PC-9 (cell line): ENCODE measurements at regions of chr7 and their contacts with region 1.

Region 1: DNA sequence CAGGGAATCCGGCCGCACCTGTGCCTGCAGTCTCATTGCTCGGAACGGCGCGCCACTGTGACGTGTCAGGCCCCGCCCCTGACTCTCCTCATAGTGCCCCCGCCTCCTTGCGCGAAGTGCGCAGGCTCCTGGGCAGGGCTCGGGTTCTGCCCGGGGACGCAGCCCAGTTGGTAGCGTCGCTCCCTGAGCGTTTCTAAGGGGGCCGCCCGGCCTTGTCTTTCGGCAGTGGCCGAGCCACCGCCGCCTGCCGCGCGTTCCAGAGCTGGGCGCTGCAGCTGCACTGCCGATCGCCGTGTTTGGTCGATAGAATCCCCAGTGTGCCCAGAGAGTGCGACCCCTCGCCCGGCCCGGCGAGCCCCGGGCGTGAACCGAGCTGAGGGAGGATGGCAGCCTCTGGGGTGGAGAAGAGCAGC is at the start of gene KLHL7:
- DNase-seq: peak; percentile 94 to 98
- H3K4me3 ChIP-seq: peak within 1 kb of the TSS; percentile 80
- H3K27ac ChIP-seq: peak within 1 kb of the TSS; percentile 80
- H3K4me1 ChIP-seq: peaks cover 20% of the 10 kb centered on the region
- H3K27me3 ChIP-seq: no peaks in the 10 kb centered on the region
- CTCF ChIP-seq: no peak
- total RNA-seq, gene KLHL7: 46.3 and 61.0 TPM in 2 replicates

Region 2: GRCh38 chr7:23013715-23014649 is 91.7 kb before region 1 on chr7 and contains the start of gene HYCC1:
- CTCF ChIA-PET with region 1: no interaction called
- POLR2A ChIA-PET with region 1: no interaction called
- intact Hi-C with region 1: loop called (anchors 5 kb)
- DNase-seq: peak; percentile 98 to 100
- H3K4me3 ChIP-seq: peak within 1 kb of the TSS; percentile 58
- H3K27ac ChIP-seq: no peak within 1 kb of the TSS
- H3K4me1 ChIP-seq: peaks cover 11% of the 10 kb centered on the region
- H3K27me3 ChIP-seq: no peaks in the 10 kb centered on the region
- CTCF ChIP-seq: peak; percentile 68
- total RNA-seq, gene HYCC1: 25.1 and 28.2 TPM in 2 replicates

Region 3: GRCh38 chr7:23117841-23118240 is 12.2 kb after region 1 on chr7:
- CTCF ChIA-PET with region 1: no interaction called
- POLR2A ChIA-PET with region 1: no interaction called
- intact Hi-C with region 1: no loop called
- DNase-seq: no peak
- H3K4me3 ChIP-seq: no peak overlapping the region
- H3K27ac ChIP-seq: no peak overlapping the region
- H3K4me1 ChIP-seq: no peaks in the 10 kb centered on the region
- H3K27me3 ChIP-seq: no peaks in the 10 kb centered on the region
- CTCF ChIP-seq: no peak

Region 4: DNA sequence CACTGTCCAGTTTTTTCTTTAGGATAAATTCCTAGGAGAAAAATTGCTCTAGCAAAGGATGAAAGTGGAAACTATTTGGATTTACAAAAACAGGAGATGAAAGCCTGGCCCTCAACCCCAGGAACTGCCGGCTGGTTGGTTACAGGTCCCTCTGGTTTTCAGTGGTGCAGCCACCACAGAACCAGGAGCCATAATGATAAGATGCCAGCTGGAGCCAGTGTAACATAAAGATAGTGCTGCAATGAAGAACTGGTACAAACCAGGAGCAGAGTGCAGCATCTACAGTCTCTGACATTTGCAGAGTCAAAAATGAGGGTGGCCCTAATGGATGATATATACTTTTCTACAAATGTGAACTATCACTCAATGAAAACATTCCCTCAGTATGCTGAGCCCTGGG is 55.8 kb after region 1 on chr7:
- CTCF ChIA-PET with region 1: no interaction called
- POLR2A ChIA-PET with region 1: no interaction called
- intact Hi-C with region 1: no loop called
- DNase-seq: no peak
- H3K4me3 ChIP-seq: no peak overlapping the region
- H3K27ac ChIP-seq: no peak overlapping the region
- H3K4me1 ChIP-seq: no peaks in the 10 kb centered on the region
- H3K27me3 ChIP-seq: no peaks in the 10 kb centered on the region
- CTCF ChIP-seq: no peak

Region 5: DNA sequence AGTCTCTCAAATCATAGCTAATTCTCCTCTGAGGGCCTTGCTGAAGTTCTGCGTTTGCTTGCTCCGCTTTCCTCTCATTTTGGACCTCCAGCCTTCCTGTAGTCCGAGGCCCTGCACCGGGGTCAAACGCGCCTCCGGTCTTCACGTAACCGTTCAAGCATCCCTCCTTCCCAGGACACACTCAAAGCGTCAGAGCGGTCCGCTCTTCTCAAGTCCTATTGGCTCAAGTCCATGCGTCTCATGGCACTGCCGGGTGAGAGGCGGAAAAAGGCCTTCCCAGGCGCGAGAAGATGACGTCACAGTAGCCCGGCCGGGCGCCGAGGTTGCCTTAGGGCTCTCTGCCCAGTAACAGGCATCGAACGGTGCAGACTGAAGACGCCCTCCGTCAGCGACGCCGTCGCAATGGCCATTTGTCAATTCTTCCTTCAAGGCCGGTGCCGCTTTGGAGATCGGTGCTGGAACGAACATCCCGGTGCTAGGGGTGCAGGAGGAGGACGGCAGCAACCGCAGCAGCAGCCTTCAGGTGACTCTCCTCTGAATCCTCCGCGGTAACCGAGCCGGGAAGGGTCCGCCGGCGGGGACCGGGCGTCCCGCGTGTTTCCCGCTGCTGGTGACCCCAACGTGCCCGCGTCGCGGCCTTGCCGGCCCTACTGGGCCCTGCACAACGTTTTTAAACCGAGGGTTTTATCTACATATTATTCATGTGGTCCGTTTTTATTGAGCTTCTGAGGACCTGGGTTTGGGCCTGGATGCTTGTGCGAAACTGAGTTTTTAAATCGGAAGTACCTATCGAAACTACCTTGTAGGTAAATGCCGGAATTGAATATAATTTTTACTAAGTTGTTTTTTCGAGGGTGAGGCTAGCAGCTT is 76.3 kb after region 1 on chr7 and contains the start of gene NUP42:
- CTCF ChIA-PET with region 1: interaction called, 6 read pairs
- POLR2A ChIA-PET with region 1: interaction called, 4 read pairs
- intact Hi-C with region 1: loop called (anchors 1 kb)
- DNase-seq: peak; percentile 99 to 100
- H3K4me3 ChIP-seq: peak within 1 kb of the TSS; percentile 98
- H3K27ac ChIP-seq: peak within 1 kb of the TSS; percentile 87
- H3K4me1 ChIP-seq: peaks cover 27% of the 10 kb centered on the region
- H3K27me3 ChIP-seq: no peaks in the 10 kb centered on the region
- CTCF ChIP-seq: no peak
- total RNA-seq, gene NUP42: 41.3 and 51.3 TPM in 2 replicates

Region 6: GRCh38 chr7:23254051-23254681 is 148.5 kb after region 1 on chr7:
- CTCF ChIA-PET with region 1: no interaction called
- POLR2A ChIA-PET with region 1: no interaction called
- intact Hi-C with region 1: no loop called
- DNase-seq: no peak
- H3K4me3 ChIP-seq: no peak overlapping the region
- H3K27ac ChIP-seq: no peak overlapping the region
- H3K4me1 ChIP-seq: no peaks in the 10 kb centered on the region
- H3K27me3 ChIP-seq: 0 out of 2 replicates have a peak, but pooled peaks cover 15% of the 10 kb centered on the region
- CTCF ChIP-seq: no peak

Region 7: DNA sequence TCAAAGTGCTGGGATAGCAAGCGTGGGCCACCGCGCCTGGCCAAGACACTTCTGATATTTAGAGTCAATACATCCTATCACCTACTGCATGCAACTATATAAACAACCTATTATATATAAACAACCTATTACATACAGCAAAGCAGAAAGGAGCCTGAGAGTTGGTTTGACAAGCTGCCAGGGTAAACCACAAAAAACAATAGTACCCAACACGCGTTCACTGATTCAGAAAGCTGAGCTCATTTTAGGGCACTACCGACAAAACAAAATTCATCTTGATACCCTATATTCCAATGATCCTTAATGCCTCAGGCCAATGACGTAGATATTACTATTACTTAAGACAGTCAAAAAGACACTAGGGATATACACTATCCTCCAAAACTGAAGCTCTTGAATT is 209.7 kb after region 1 on chr7:
- CTCF ChIA-PET with region 1: no interaction called
- POLR2A ChIA-PET with region 1: interaction called, 16 read pairs
- intact Hi-C with region 1: no loop called
- DNase-seq: no peak
- H3K4me3 ChIP-seq: no peak overlapping the region
- H3K27ac ChIP-seq: no peak overlapping the region
- H3K4me1 ChIP-seq: no peaks in the 10 kb centered on the region
- H3K27me3 ChIP-seq: no peaks in the 10 kb centered on the region
- CTCF ChIP-seq: no peak

Region 8: DNA sequence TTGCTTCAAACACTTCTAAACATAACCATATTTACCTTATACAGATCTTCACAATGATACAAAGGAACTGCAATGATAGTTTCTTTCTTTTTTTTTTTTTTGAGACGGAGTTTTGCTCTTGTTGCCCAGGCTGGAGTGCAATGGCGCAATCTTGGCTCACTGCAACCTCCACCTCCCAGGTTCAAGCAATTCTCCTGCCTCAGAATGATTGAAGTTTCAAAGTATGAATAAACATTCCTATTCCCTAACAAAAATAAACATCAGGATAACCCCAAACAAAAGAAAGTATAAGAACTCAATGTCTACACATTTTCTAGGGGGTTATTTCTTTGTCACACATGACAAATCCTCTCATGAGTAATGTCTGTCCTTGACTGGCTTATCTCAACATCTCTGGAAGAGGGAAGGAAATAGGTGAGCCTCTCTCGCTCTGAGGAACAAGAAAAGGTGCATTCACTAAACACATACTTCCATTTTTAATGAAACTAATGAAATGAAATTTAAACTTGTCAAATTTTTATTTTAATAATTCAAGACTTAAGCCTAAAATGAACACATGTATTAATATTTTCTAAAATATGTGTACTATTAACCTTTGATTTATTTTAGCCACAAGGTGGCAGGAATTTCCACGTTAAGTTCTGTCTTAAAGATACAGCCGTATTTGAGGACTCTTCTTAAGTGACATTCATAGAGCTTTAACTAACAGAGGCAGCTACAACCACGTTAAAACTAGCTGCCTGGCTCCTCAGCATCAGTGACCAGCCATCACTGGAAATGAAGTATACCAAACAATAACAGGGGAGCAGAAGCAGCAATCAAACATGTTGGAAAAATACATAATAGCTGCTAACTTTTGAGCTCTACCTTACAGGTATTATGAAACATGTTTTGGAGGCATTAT is 251.8 kb after region 1 on chr7:
- CTCF ChIA-PET with region 1: no interaction called
- POLR2A ChIA-PET with region 1: no interaction called
- intact Hi-C with region 1: no loop called
- DNase-seq: peak; percentile 51 to 99
- H3K4me3 ChIP-seq: peak overlapping the region; percentile 28
- H3K27ac ChIP-seq: peak overlapping the region; percentile 63
- H3K4me1 ChIP-seq: peaks cover 51% of the 10 kb centered on the region
- H3K27me3 ChIP-seq: no peaks in the 10 kb centered on the region
- CTCF ChIP-seq: peak; percentile 83